Sigmoid colon (tissue), 7 donors: ENCODE measurements at regions of chr22 and their contacts with region 1.

Region 1: GRCh38 chr22:34798605-34799004 is 267.4 kb upstream of the ISX start:
- DNase-seq: no peak
- H3K4me3 ChIP-seq: no peak overlapping the region
- H3K27ac ChIP-seq: no peak overlapping the region
- H3K4me1 ChIP-seq: peaks cover 0 to 15% (median 8%) of the 10 kb centered on the region in 4 donors
- H3K27me3 ChIP-seq: peaks cover 0 to 9% (median 3%) of the 10 kb centered on the region in 3 donors
- CTCF ChIP-seq: no peak
- EP300 ChIP-seq: no peak
- POLR2A ChIP-seq: no peak

Region 2: DNA sequence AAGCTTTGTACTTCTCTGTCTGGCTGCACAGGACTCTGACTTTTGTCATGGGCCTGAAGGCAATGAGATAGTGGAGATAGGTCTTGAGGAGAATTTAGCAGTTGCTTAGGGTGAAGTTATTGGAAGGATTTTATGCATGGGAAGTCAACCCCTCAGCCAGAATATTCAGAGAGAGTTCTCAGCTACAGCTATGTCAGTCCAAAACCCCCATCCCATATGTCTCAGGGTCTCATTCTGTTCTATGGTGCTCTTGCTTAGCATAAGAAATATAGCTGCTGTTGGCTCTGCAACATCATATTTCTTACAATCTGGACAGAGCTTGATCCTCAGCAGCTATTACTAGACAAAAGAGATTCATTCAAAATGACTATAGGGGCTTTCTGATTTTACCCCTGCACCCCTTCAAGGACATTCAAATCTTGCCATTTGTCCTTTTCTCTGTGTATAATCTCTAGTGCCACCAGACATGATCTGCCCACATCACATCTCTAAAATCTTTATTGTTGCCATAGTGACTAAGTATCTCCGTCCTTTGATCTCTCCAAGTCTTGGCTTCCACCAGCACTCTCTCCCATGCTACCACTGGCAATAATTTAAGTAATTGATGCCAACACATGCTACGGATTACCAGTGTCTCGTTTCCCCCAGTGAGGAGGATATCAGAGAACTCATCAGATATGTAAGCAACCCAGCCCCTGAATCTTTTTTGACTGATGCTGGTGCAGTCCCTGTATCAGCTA is 59.8 kb before region 1 on chr22:
- intact Hi-C with region 1: loop called (anchors 10 kb)
- DNase-seq: no peak
- H3K4me3 ChIP-seq: no peak overlapping the region
- H3K27ac ChIP-seq: no peak overlapping the region
- H3K4me1 ChIP-seq: no peaks in the 10 kb centered on the region
- H3K27me3 ChIP-seq: no peaks in the 10 kb centered on the region
- CTCF ChIP-seq: no peak
- EP300 ChIP-seq: no peak
- POLR2A ChIP-seq: no peak